ENCODE measurements at regions of chr13 and their contacts with region 1.

Region 1: DNA sequence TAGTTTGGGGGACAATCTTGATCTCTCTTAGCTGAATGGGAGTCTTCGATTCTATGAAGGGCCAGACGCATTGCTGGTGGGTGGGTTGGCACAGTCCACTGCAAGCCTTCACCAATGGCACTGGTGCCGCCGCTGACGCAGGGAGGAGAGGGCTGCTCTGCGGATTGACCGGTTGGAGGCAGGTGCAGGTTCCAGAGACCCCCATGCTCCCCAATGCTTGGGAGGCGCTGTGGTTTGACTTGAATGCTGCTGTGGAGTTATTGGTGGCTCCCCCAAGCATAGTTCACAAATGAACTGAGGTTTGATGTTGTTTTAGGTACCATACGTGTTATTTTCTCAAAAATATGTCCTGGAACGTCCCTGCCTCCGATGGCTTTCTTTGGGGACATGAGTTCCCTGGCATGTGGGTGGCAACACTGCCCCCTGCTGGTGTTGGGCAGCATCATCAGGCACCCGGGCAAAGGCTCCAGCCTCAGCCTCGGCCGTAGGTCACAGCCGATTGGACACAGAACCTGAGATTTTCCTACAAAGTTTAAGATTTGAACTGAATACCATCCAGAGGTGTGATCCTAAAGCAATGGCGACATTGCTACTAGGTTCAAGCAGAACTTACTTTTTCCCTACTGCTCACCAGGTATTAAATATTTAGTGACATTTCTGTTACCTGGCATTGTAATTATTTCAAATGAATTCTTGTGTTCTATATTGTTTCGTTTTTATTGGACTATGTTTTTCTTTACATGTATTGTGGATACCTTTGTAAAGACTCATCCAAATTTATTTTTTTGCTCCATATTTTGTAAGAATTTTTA is 95.5 kb downstream of the ANKRD10 start:
- DNase-seq: peak; percentile 66 to 87 (median 78)
- H3K4me3 ChIP-seq: peak overlapping the region in 3 of 59 donors; percentile 13 to 16 (median 14)
- H3K27ac ChIP-seq: peak overlapping the region in 1 of 59 donors; percentile 17
- H3K27me3 ChIP-seq: no peaks in the 10 kb centered on the region
- CTCF ChIP-seq: peak; percentile 84 to 100 (median 98)

Region 2: GRCh38 chr13:110220471-110220870 is 598.9 kb before region 1 on chr13:
- intact Hi-C with region 1: loop called in 1 of 2 experiments (anchors 5 kb)
- DNase-seq: no peak
- H3K4me3 ChIP-seq: no peak overlapping the region
- H3K27ac ChIP-seq: peak overlapping the region in 11 of 59 donors; percentile 0 to 87 (median 27)
- H3K27me3 ChIP-seq: no peaks in the 10 kb centered on the region
- CTCF ChIP-seq: no peak

Region 3: DNA sequence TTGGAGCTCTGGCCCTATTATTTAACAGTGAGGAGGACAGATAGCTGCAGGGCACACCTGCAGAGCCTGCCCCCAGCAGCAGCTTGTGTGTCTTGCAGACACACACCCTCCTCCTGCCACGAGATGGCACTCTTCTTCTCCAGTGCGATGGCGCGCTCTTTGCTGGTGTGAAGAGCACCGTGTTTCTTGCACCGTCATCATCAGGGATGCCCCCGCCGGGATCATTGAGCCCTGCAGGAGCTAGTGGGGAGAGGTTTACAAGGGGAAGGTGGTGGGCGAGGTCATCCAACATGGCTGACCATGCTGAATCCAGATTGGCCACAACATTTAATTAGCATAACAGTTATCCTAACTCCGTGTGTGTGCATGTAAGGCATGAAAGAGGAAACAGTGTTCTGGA is 363.5 kb before region 1 on chr13:
- intact Hi-C with region 1: loop called in 1 of 2 experiments (anchors 10 kb)
- DNase-seq: peak; percentile 48 to 88 (median 80)
- H3K4me3 ChIP-seq: peak overlapping the region in 44 of 59 donors; percentile 7 to 56 (median 36)
- H3K27ac ChIP-seq: no peak overlapping the region
- H3K27me3 ChIP-seq: no peaks in the 10 kb centered on the region
- CTCF ChIP-seq: peak; percentile 54 to 94 (median 82)

Region 4: DNA sequence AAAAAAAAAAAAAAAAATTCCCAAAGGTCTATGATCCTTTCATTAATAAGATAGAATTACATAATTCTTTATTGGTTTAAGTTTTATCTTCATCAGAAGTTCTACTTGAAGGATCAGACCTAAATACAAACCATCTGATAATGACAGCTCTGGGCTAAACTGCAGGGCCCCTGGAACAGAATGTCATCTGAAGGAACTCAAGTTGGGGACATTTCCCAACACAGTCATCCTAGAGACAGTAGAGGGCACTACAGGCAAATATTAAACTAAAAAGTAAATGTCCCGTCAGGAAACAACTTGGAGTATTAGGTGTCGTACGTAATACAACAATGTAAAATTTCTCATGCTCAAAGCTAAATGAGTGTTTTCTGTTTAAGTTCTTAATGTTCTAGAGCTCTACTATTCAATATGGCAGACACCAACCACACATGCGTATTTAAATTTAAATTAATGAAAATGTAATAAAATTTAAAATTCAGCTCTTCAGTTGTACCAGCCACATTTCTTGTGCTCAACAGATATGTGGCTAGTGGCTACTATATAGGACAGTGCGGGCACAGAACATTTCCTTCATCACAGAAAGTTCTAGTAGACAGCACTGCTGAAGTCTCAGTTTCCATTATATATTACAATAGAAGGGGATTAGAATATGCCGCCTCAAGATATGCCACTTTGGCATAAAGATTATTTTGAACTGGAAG is 225.8 kb before region 1 on chr13:
- intact Hi-C with region 1: loop called in 1 of 2 experiments (anchors 2 kb)
- DNase-seq: no peak
- H3K4me3 ChIP-seq: no peak overlapping the region
- H3K27ac ChIP-seq: no peak overlapping the region
- H3K27me3 ChIP-seq: no peaks in the 10 kb centered on the region
- CTCF ChIP-seq: peak in 55 of 56 donors; percentile 29 to 81 (median 63)

Region 5: GRCh38 chr13:110644892-110645521 is 174.4 kb before region 1 on chr13:
- intact Hi-C with region 1: loop called (anchors 2 to 5 kb)
- DNase-seq: peak; percentile 46 to 91 (median 73)
- H3K4me3 ChIP-seq: peak overlapping the region in 7 of 59 donors; percentile 3 to 35 (median 25)
- H3K27ac ChIP-seq: peak overlapping the region in 44 of 59 donors; percentile 1 to 70 (median 40)
- H3K27me3 ChIP-seq: no peaks in the 10 kb centered on the region
- CTCF ChIP-seq: peak in 53 of 56 donors; percentile 18 to 70 (median 57)

Region 6: DNA sequence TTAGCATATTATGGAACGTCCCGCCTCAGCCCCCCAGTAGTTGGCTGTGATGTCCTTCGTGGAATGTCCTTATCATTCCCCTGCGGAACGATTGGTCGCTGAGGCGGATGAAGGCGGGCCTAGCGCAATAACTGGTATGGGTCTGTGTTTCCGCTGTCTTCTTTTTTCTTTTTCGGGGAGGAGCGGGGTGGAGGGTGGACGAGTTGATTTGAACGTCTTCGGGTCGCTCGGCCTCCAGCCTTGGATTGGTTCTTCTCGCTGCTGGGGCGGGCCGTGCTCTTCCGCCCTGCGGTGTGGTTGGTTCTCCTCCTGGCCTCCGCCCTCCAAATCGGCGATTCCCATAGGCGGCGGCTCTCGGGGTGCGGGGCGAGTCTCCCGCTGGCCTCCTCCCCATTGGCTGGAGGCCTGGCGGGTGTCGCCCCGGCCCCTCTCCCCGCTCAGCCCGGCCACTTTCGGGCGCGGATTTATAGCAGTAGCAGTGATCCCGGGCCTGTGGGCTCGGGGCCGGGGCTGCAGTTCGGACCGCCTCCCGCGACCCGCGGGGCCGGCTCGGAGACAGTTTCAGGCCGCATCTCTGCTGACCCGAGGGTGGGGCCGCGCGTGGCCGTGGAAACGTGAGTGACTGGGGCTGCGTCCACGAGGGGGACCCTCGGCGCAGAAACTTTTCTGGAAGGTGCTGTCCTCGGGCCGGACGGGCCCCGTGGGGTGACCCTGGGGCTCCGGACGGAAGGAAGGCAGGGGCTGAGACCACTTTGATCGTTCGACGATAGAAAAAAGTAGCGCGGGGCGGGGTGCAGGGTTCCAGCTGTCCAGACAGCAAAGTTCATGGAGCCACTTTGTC is 103.8 kb before region 1 on chr13:
- intact Hi-C with region 1: loop called (anchors 5 to 10 kb)
- DNase-seq: peak; percentile 90 to 100 (median 99)
- H3K4me3 ChIP-seq: peak overlapping the region; percentile 76 to 100 (median 98)
- H3K27ac ChIP-seq: peak overlapping the region; percentile 92 to 100 (median 99)
- H3K27me3 ChIP-seq: no peaks in the 10 kb centered on the region
- CTCF ChIP-seq: peak in 37 of 56 donors; percentile 6 to 55 (median 26)

Region 7: GRCh38 chr13:111031531-111031961 is 212.1 kb after region 1 on chr13:
- intact Hi-C with region 1: no loop called
- DNase-seq: no peak
- H3K4me3 ChIP-seq: no peak overlapping the region
- H3K27ac ChIP-seq: no peak overlapping the region
- H3K27me3 ChIP-seq: peaks cover 0 to 7% (median 0%) of the 10 kb centered on the region in 45 donors
- CTCF ChIP-seq: no peak

Region 8: GRCh38 chr13:111460548-111461444 is 641.4 kb after region 1 on chr13:
- intact Hi-C with region 1: loop called in 1 of 2 experiments (anchors 10 kb)
- DNase-seq: peak; percentile 44 to 75 (median 72)
- H3K4me3 ChIP-seq: no peak overlapping the region
- H3K27ac ChIP-seq: peak overlapping the region in 2 of 59 donors; percentile 27 to 76
- H3K27me3 ChIP-seq: peaks cover 0 to 46% (median 0%) of the 10 kb centered on the region in 45 donors
- CTCF ChIP-seq: peak in 54 of 56 donors; percentile 34 to 83 (median 66)

Measured in dorsolateral prefrontal cortex (tissue), 120 donors.